ENCODE measurements at regions of chr3 and their contacts with region 1.

Region 1: DNA sequence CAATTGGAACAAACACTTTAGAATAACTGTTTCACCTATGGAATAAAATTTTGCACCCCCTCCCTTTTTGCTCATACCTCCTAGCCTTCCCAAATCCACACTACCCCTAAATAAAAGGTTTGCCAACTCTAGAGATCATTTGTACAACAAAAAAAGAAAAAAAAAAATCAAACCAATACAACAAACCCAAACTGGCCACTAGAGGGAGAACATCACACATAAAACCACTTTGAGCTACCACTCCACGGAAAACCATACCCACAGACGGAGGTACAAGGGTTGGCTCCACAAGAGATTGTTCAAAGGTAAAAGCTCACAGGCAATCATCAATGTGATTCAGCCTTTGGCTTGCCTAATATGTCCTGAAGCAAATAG is 47.6 kb downstream of the SETMAR start:
- DNase-seq: peak in 8 of 9 donors; percentile 46 to 75 (median 66)
- ATAC-seq: peak; percentile 95
- H3K4me3 ChIP-seq: no peak overlapping the region
- H3K4me3 Mint-ChIP-seq: peak overlapping the region; percentile 31 to 85 (median 68)
- H3K27ac ChIP-seq: no peak overlapping the region
- H3K27ac Mint-ChIP-seq: peak overlapping the region in 7 of 9 donors; percentile 1 to 42 (median 16)
- H3K4me1 ChIP-seq: peaks cover 0 to 5% of the 10 kb centered on the region in 2 donors
- H3K4me1 Mint-ChIP-seq: peaks cover 10 to 23% (median 18%) of the 10 kb centered on the region in 7 donors
- H3K27me3 ChIP-seq: no peaks in the 10 kb centered on the region
- H3K27me3 Mint-ChIP-seq: peaks cover 0 to 10% (median 0%) of the 10 kb centered on the region in 5 donors

Region 2: DNA sequence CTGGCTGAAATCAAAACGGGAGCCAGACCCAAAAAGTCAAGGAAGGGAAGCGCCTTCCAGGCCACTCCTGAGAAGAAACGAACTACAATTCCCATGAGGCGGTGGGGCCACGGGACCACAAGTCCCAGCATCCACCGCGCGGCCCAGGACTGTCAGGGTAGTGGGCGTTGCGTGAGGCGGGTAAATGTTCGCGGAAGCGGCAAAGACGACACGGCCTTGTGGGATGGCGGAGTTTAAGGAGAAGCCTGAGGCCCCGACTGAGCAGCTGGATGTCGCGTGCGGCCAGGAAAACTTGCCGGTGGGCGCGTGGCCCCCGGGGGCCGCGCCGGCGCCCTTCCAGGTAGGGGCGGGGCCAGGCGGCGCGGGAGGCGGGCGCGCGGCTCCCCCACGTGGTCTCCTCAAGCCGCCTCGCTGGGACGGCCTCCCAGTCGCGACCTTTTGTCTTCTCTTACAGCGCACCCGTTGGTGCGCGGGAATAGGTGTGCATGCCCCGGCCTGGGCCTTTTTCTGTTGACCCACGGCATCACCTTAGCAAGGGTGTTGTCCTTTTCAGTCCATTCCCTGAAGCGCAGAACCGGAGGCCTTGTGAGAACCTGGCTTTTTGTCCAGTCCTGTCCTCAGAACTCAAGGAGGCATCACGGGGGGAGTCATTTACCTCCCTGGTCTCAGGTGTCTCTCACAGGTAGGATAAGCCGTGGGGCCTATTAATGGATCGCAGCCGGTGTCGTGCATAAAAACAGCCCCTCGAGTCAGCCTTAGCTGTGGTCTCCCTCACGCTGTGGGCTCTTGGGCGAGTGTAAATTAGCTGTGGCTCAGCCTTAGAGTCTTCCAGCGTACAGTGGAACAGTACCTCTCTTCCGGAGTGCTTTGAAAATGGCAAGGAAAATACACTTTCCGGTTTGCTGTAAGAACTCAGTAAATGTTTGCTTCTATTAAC is 47.3 kb before region 1 on chr3 and contains the start of gene SETMAR:
- CTCF ChIA-PET with region 1: no interaction called
- POLR2A ChIA-PET with region 1: no interaction called
- intact Hi-C with region 1: loop called in 1 of 2 experiments (anchors 1 kb)
- DNase-seq: peak; percentile 73 to 86 (median 82)
- ATAC-seq: peak; percentile 97
- H3K4me3 ChIP-seq: peak within 1 kb of the TSS; percentile 92
- H3K4me3 Mint-ChIP-seq: peak within 1 kb of the TSS; percentile 88 to 99 (median 97)
- H3K27ac ChIP-seq: peak within 1 kb of the TSS; percentile 91
- H3K27ac Mint-ChIP-seq: peak within 1 kb of the TSS; percentile 92 to 99 (median 98)
- H3K4me1 ChIP-seq: peaks cover 0 to 8% of the 10 kb centered on the region in 2 donors
- H3K4me1 Mint-ChIP-seq: peaks cover 8 to 45% (median 34%) of the 10 kb centered on the region in 7 donors
- H3K27me3 ChIP-seq: no peaks in the 10 kb centered on the region
- H3K27me3 Mint-ChIP-seq: no peaks in the 10 kb centered on the region
- total RNA-seq, gene SETMAR: 6.4 to 13.7 (median 12.5) TPM

Region 3: DNA sequence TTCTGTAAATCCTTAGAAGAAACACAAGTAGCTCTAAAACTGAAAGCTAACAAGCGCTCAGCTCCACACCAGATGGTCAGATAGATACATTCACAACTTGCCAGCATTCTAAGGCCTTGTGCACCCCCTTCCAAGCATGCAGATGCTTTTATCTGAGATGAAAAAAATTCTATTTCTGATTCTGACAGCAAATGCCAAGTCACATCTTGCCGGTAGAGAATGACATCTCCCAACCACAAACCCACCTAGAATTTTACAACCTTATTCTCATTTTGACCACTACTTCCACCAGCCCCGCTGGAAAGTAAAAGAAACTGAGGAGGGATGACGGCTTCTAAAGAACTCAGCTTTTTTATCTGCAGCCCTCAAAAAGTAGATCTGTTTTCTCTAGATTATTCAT is 58.6 kb after region 1 on chr3:
- CTCF ChIA-PET with region 1: interaction called, 3 read pairs
- POLR2A ChIA-PET with region 1: no interaction called
- intact Hi-C with region 1: loop called in 1 of 2 experiments (anchors 1 kb)
- DNase-seq: peak in 1 of 9 donors; percentile 26
- ATAC-seq: no peak
- H3K4me3 ChIP-seq: no peak overlapping the region
- H3K4me3 Mint-ChIP-seq: peak overlapping the region in 1 of 10 donors; percentile 65
- H3K27ac ChIP-seq: no peak overlapping the region
- H3K27ac Mint-ChIP-seq: peak overlapping the region in 2 of 9 donors; percentile 29 to 80
- H3K4me1 ChIP-seq: no peaks in the 10 kb centered on the region
- H3K4me1 Mint-ChIP-seq: peaks cover 0 to 33% (median 5%) of the 10 kb centered on the region in 7 donors
- H3K27me3 ChIP-seq: no peaks in the 10 kb centered on the region
- H3K27me3 Mint-ChIP-seq: no peaks in the 10 kb centered on the region

Region 4: GRCh38 chr3:4524088-4525023 is 173.6 kb after region 1 on chr3:
- CTCF ChIA-PET with region 1: interaction called, 6 read pairs
- POLR2A ChIA-PET with region 1: no interaction called
- intact Hi-C with region 1: loop called in 1 of 2 experiments (anchors 1 kb)
- DNase-seq: no peak
- ATAC-seq: no peak
- H3K4me3 ChIP-seq: no peak overlapping the region
- H3K4me3 Mint-ChIP-seq: no peak overlapping the region
- H3K27ac ChIP-seq: no peak overlapping the region
- H3K27ac Mint-ChIP-seq: no peak overlapping the region
- H3K4me1 ChIP-seq: peaks cover 3 to 6% of the 10 kb centered on the region in 2 donors
- H3K4me1 Mint-ChIP-seq: peaks cover 21 to 65% (median 34%) of the 10 kb centered on the region in 7 donors
- H3K27me3 ChIP-seq: no peaks in the 10 kb centered on the region
- H3K27me3 Mint-ChIP-seq: no peaks in the 10 kb centered on the region

Region 5: GRCh38 chr3:4584456-4585249 is 233.9 kb after region 1 on chr3:
- CTCF ChIA-PET with region 1: interaction called, 5 read pairs
- POLR2A ChIA-PET with region 1: interaction called, 3 read pairs
- intact Hi-C with region 1: loop called in 1 of 2 experiments (anchors 1 kb)
- DNase-seq: peak in 6 of 9 donors; percentile 6 to 36 (median 26)
- ATAC-seq: peak; percentile 49
- H3K4me3 ChIP-seq: peak overlapping the region; percentile 38
- H3K4me3 Mint-ChIP-seq: peak overlapping the region; percentile 73 to 91 (median 86)
- H3K27ac ChIP-seq: peak overlapping the region; percentile 40
- H3K27ac Mint-ChIP-seq: peak overlapping the region; percentile 77 to 96 (median 85)
- H3K4me1 ChIP-seq: peaks cover 35 to 38% of the 10 kb centered on the region in 2 donors
- H3K4me1 Mint-ChIP-seq: peaks cover 29 to 90% (median 79%) of the 10 kb centered on the region in 7 donors
- H3K27me3 ChIP-seq: no peaks in the 10 kb centered on the region
- H3K27me3 Mint-ChIP-seq: no peaks in the 10 kb centered on the region

Region 6: GRCh38 chr3:4712143-4712542 is 361.4 kb after region 1 on chr3:
- CTCF ChIA-PET with region 1: interaction called, 6 read pairs
- POLR2A ChIA-PET with region 1: no interaction called
- intact Hi-C with region 1: loop called (anchors 2 to 5 kb)
- DNase-seq: no peak
- ATAC-seq: no peak
- H3K4me3 ChIP-seq: no peak overlapping the region
- H3K4me3 Mint-ChIP-seq: no peak overlapping the region
- H3K27ac ChIP-seq: no peak overlapping the region
- H3K27ac Mint-ChIP-seq: no peak overlapping the region
- H3K4me1 ChIP-seq: no peaks in the 10 kb centered on the region
- H3K4me1 Mint-ChIP-seq: peaks cover 0 to 38% (median 0%) of the 10 kb centered on the region in 7 donors
- H3K27me3 ChIP-seq: no peaks in the 10 kb centered on the region
- H3K27me3 Mint-ChIP-seq: no peaks in the 10 kb centered on the region